RWPE1 (cell line): ENCODE measurements at regions of chr2 and their contacts with region 1.

Region 1: DNA sequence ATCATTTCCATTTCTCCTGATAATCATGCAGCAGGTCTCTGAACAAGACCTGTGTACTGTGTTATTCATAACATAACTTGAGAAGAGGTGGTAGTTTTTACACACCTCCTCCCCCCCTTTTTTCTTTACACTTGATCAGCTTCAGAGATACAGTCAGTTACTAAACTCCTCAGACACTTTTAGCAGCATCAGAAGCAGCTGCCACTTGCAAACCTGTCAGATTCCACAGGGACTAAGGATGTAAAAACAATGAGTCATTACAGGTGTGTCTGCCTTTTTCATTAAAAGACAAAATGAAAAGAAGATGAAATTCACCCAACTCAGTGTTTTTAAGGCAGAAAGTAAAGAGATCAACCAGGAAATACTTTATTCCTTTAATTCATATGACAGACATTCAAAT is 254.0 kb downstream of the NRXN1 start:
- DNase-seq: no peak
- H3K27ac ChIP-seq: no peak overlapping the region
- CTCF ChIP-seq: no peak

Region 2: DNA sequence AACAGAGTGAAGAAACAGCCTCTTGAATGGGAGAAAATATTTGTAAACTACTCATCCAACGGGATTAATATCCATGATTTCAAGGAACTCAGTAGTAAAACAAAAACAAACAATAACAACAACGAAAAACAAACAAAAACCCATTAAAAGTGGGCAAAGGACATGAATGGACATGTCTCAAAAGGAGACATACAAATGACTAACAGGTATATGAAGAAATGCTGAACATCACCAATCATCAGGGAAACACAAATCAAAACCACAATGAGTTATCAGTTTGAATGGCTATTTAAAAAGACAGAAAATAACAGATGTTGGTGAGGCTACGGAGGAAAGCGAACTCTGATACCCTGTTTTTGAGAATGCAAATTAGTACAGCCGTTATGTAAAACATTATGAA is 478.8 kb after region 1 on chr2:
- CTCF ChIA-PET with region 1: interaction called, 10 read pairs
- POLR2A ChIA-PET with region 1: no interaction called
- DNase-seq: no peak
- H3K27ac ChIP-seq: no peak overlapping the region
- CTCF ChIP-seq: no peak